Calu3 (cell line): ENCODE measurements at regions of chr6 and their contacts with region 1.

Region 1: DNA sequence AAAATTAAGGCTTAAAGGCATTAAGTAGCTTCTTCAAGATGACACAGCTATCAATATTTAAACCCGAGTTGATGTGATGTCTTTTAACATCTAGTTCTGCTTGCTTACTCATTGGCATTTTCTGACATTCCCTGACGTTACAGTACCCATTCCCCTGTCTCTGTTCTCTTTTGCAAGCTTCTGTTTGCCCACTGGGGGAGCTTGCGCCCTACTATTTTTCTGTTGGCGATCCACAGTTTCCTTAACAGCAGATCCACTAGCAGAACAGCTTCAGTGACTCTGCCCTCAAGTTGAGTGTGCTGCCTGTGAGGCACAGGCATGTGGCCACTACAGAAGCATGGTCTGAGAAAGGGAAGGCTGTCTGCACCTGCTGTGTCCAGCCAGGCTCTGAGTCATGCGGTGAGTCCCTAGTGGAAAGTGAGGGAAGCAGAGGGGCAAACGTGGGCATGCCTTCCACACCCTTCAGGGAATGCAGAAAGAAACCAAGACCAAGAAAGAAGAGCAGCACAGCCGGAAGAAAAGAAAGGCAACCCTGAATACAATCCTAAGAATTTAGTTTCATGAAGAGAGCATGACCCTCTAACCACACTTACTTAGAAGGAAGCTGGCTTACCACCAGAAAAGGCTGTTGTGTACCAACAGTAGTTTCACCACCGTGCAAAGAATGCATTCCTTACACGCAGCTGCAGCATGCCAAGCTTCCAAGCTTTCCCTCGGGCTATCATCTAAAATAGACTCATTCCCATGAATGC is 97.7 kb upstream of the VGLL2 start:
- DNase-seq: peak; percentile 81
- H3K4me3 Mint-ChIP-seq: peak overlapping the region; percentile 46
- H3K27ac Mint-ChIP-seq: peak overlapping the region; percentile 82
- H3K4me1 Mint-ChIP-seq: peaks cover 45% of the 10 kb centered on the region
- H3K27me3 Mint-ChIP-seq: no peaks in the 10 kb centered on the region
- CTCF ChIP-seq: no peak

Region 2: GRCh38 chr6:116975600-116975999 is 192.1 kb before region 1 on chr6:
- CTCF ChIA-PET with region 1: no interaction called
- intact Hi-C with region 1: loop called (anchors 5 kb)
- DNase-seq: no peak
- H3K4me3 Mint-ChIP-seq: no peak overlapping the region
- H3K27ac Mint-ChIP-seq: no peak overlapping the region
- H3K4me1 Mint-ChIP-seq: no peaks in the 10 kb centered on the region
- H3K27me3 Mint-ChIP-seq: no peaks in the 10 kb centered on the region
- CTCF ChIP-seq: no peak

Region 3: DNA sequence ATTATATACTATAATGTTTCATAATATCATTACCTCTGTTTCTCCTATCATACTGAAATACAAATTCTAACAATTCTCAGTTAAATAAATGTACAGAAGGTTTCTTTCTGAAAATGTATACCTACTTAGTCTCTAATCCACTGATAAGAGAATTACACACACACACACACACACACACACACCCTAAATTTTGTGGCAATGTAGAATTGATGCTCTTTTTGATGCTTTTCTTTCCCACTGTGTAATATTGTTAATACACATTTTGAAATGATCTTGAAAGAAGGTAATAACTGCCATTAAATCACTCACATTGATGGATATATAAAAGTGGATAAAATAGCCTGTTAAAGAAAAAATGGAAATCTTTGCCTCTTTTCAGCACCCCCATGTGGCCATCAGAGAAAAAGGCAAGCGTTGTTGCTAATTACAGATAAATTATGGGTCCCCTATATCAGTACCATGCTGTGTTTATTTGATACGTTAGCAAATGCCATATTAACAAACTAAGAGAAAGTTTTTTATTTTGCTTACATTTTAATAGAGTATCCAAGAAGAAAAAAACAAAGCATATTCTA is 21.0 kb after region 1 on chr6:
- CTCF ChIA-PET with region 1: interaction called, 5 read pairs
- intact Hi-C with region 1: loop called (anchors 2 kb)
- DNase-seq: no peak
- H3K4me3 Mint-ChIP-seq: no peak overlapping the region
- H3K27ac Mint-ChIP-seq: no peak overlapping the region
- H3K4me1 Mint-ChIP-seq: no peaks in the 10 kb centered on the region
- H3K27me3 Mint-ChIP-seq: no peaks in the 10 kb centered on the region
- CTCF ChIP-seq: peak; percentile 52